AG04450 (cell line): ENCODE measurements at regions of chr3 and their contacts with region 1.

Region 1: DNA sequence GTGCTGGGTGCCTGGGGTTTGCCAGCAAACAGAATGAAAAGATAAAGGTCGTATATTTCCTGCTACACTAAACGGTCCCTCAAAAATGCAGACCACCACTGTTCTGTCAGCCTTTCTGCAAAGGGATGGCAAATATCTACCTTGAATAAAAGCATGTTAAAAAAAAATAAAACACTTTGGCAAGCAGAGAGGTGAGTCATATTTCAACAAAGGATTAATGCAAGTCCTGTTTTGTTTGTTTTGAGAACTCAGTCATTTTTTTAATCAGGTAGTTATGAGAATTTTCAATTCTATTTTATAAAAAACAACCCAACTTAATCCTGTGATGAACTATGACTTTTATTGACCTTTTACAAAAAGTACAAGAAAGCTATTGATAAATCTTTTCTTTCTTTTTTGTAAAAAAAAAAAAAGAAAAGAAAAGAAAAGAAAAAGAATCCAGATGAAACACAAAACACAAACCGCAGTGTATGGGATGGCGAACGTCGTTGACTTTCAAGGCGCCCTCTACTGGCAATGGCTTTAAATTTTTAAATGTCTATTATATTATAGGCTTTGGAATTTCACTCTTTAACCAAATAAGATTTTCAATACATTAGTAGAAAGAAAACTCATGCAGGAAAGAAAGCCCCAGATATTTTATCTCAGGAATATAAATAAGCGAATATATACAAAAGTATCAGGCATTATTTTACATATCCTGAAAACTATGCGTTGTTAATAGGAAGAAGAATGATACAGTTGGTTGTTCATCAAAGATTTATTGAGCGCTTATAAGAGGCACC is 87.8 kb downstream of the NCEH1 start:
- DNase-seq: no peak
- H3K4me3 ChIP-seq: no peak overlapping the region
- H3K27ac ChIP-seq: no peak overlapping the region
- H3K27me3 ChIP-seq: no peaks in the 10 kb centered on the region
- CTCF ChIP-seq: peak; percentile 67

Region 2: GRCh38 chr3:171980578-171981270 is 642.4 kb before region 1 on chr3:
- CTCF ChIA-PET with region 1: no interaction called
- POLR2A ChIA-PET with region 1: no interaction called
- DNase-seq: no peak
- H3K4me3 ChIP-seq: no peak overlapping the region
- H3K27ac ChIP-seq: no peak overlapping the region
- H3K27me3 ChIP-seq: no peaks in the 10 kb centered on the region
- CTCF ChIP-seq: no peak

Region 3: GRCh38 chr3:172397716-172398405 is 225.2 kb before region 1 on chr3:
- CTCF ChIA-PET with region 1: interaction called, 12 read pairs
- POLR2A ChIA-PET with region 1: no interaction called
- DNase-seq: peak; percentile 46
- H3K4me3 ChIP-seq: no peak overlapping the region
- H3K27ac ChIP-seq: no peak overlapping the region
- H3K27me3 ChIP-seq: no peaks in the 10 kb centered on the region
- CTCF ChIP-seq: no peak

Region 4: DNA sequence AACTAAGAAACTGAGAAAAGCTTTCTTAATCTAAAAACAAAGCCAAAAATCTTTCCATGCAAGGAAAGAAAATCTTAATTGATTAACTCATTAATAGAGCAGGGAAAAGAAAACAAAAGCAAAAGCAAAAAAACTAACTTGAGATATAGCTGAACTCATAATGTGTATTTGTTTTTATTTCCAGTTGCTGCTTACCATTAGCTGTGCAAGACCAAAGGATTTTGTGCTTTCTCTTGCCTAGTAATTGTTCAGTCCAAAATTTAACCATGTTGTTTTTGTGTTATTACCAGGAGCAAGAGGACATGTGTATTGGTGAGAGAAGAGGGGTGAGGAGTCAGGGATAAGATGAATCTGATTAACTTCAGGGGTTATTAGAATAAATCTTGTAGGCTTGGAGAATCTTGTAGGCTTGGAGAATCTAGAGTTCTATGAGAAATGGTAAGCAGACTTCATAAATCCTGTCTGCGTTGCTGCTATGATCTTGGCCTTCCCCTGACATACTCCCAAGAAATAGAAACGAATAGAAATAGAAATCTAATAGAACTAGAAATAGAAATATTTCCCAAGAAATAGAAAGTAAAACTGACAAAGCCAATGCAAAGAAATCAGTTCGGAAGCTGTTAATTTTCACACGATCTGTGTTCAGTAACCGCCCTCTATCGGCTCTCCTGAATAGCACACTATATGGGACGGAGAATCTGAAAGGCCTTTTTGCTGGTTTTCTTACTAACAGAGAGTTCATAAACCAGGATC is 27.3 kb before region 1 on chr3:
- CTCF ChIA-PET with region 1: interaction called, 22 read pairs
- POLR2A ChIA-PET with region 1: no interaction called
- DNase-seq: no peak
- H3K4me3 ChIP-seq: no peak overlapping the region
- H3K27ac ChIP-seq: no peak overlapping the region
- H3K27me3 ChIP-seq: no peaks in the 10 kb centered on the region
- CTCF ChIP-seq: peak; percentile 77

Region 5: DNA sequence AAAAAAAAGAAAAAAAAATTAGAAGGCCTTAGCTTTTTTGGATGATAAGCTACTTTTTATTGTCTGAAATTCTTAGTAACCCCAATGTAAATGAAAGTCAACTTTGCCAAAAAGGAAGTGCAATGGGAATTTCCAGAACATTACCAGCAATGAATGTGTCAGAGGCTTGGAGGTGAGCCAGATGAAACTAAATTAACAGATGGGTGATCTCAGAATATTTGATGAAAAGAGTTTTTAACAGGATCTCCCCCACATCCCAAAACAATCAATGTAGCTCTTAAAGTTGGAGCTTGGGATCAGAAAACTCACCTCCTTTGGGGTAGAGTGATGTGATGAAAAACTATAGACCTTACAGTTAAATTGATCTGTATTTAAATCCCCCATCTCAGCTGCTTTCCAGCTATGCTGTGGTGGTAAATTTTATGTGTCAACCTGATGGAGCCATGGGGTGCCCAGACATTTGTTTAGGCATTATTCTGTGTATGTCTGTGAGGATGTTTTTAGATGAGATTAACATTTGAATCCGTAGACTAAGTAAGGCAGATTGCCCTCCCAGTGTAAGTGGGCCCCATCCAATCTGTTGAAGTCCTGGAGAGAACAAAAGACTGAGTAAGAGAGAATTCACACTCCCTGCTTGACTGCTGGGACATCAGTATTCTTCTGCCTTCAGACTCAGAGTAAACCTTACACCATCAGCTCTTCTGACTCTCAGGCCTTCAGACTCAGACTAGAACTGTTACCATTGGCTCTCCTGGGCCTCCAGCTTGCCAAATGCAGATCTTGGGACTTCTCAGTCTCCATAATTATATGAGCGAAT is 15.6 kb before region 1 on chr3:
- CTCF ChIA-PET with region 1: interaction called, 48 read pairs
- POLR2A ChIA-PET with region 1: interaction called, 3 read pairs
- DNase-seq: peak; percentile 61
- H3K4me3 ChIP-seq: no peak overlapping the region
- H3K27ac ChIP-seq: peak overlapping the region; percentile 86
- H3K27me3 ChIP-seq: no peaks in the 10 kb centered on the region
- CTCF ChIP-seq: no peak

Region 6: GRCh38 chr3:172635588-172635987 is 12.5 kb after region 1 on chr3:
- CTCF ChIA-PET with region 1: interaction called, 15 read pairs
- POLR2A ChIA-PET with region 1: no interaction called
- DNase-seq: no peak
- H3K4me3 ChIP-seq: no peak overlapping the region
- H3K27ac ChIP-seq: no peak overlapping the region
- H3K27me3 ChIP-seq: no peaks in the 10 kb centered on the region
- CTCF ChIP-seq: no peak

Region 7: GRCh38 chr3:172648747-172649146 is 25.6 kb after region 1 on chr3:
- CTCF ChIA-PET with region 1: interaction called, 11 read pairs
- POLR2A ChIA-PET with region 1: interaction called, 4 read pairs
- DNase-seq: no peak
- H3K4me3 ChIP-seq: no peak overlapping the region
- H3K27ac ChIP-seq: no peak overlapping the region
- H3K27me3 ChIP-seq: no peaks in the 10 kb centered on the region
- CTCF ChIP-seq: no peak

Region 8: DNA sequence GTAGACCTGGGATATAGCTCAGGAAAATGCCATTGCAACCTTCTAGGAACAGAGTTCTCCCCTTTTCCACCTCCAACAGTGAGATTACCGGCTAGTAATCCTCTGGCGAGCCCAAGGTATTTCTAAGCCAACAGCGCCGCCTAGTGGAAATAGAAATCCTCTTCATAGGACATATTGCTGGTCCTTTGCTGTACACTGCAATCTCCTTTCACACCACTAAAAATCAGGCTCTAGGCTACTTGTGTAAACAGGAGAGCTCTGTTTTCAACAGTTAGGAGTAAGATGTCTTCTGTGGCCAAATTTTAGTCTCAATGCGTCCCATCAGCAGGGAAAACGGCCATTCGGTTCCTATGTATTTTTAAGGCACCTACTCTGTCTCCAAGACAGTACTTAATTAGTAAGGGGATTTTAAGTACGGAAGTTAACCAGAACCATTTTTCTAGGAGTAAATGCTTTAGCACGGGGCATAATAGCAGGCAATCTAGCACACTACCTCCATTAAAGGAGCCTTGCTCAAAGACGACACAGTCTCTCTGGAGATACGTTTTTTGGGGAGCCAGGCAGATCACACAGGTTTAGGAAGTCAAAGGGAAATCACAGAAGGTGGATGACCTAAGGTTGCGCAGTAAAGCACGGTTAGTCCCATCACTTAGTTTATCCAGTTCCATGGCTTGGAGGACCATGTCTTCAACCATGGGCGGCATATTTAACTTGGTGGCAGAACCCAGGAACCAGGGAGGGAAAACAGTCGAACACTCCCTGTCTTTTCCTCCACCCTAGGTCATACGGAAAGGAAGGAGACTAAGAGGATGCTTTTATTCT is 44.0 kb after region 1 on chr3:
- CTCF ChIA-PET with region 1: interaction called, 17 read pairs
- POLR2A ChIA-PET with region 1: no interaction called
- DNase-seq: peak; percentile 70
- H3K4me3 ChIP-seq: no peak overlapping the region
- H3K27ac ChIP-seq: no peak overlapping the region
- H3K27me3 ChIP-seq: no peaks in the 10 kb centered on the region
- CTCF ChIP-seq: peak; percentile 89